H1 (cell line): ENCODE measurements at regions of chr20 and their contacts with region 1.

Region 1: GRCh38 chr20:956330-956951 is 40.3 kb upstream of the ANGPT4 start:
- DNase-seq: peak; percentile 53 to 93
- H3K4me3 ChIP-seq: no peak overlapping the region
- H3K27ac ChIP-seq: no peak overlapping the region
- H3K4me1 ChIP-seq: peaks cover 0 to 3% (median under 1%) of the 10 kb centered on the region in 4 experiments; a peak in 3 of 7 replicates
- H3K27me3 ChIP-seq: peaks cover 0 to 3% (median 0%) of the 10 kb centered on the region in 4 experiments; a peak in 1 of 7 replicates
- CTCF ChIP-seq: peak; percentile 95 to 99 (median 98)
- EP300 ChIP-seq: no peak
- POLR2A ChIP-seq: no peak
- RAD21 ChIP-seq: peak; percentile 100

Region 2: DNA sequence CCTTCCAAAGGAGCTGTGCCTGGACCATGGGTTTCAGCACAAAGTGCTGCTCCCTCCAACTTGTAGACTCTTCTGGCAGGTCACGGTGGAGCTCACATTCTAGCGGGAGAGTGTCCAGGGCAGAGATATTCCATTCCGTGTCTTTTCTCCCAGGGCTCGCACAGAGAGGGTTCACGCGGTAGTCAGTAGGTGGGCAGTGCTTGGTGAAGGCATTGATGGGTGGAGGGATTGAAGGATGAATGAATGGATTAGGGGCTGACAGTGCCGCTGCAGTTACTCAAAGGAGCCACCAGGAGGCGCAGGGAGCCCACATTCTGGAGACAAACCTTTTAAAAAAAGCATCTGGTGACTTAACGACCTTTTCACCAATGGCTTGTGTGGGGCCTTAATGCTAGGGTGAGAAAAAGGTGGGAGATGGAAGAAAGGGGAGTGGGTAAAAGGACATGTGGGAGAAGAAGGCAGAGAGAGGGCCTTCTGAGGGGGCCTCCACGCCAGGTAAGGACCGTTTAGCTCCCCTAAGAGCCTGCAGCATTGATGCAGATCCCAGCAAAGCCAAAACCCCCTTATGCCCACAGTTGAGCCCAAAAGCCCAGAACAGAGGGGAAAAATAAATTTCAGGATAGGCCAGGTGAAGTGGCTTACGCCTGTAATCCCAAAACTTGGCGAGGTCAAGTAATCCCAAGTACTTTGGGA is 140.4 kb before region 1 on chr20:
- CTCF ChIA-PET with region 1: interaction called, 153 read pairs
- POLR2A ChIA-PET with region 1: no interaction called
- DNase-seq: peak; percentile 41 to 82
- H3K4me3 ChIP-seq: no peak overlapping the region
- H3K27ac ChIP-seq: no peak overlapping the region
- H3K4me1 ChIP-seq: no peaks in the 10 kb centered on the region; a peak in 2 of 7 replicates
- H3K27me3 ChIP-seq: no peaks in the 10 kb centered on the region
- CTCF ChIP-seq: peak; percentile 83 to 97 (median 91)
- EP300 ChIP-seq: no peak
- POLR2A ChIP-seq: no peak
- RAD21 ChIP-seq: peak; percentile 96

Region 3: DNA sequence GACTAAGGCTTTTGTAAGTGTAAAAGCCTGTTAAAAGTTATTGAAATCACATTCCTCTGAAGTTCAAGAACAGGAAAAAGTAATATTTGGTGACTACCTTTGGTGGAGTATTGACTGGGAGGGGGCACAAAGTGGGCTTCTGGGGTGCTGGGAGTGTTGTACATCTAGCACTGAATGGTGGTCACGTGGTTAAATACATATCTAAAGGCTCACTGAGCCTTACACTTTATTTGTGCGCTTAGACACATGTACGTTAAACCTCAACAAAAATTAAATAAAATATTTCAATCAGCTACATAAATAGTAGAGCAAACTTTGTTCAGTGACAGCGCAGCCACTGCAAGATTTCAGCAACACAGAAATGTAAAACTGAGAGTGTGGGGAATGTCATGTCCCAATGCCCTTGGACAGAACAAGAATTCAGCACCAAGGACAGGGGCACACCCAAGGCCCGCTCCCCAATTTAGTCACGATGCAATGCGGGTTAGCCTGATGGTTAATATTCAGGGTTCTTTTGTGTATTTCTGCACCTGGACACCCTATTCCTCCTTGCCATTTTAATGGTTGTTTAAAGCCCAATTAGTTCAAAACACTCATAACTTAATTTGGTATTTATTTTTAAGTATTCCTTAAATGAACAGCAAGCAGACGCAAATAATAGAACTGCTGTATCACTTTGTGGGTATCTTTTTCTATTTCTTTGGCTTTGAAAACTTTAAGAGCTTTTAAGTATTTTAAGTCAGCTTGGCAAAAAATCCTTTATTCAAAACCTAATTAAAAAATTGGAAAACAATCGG is 77.7 kb before region 1 on chr20:
- CTCF ChIA-PET with region 1: interaction called, 191 read pairs
- POLR2A ChIA-PET with region 1: no interaction called
- DNase-seq: peak in 1 of 2 experiments; percentile 81
- H3K4me3 ChIP-seq: no peak overlapping the region
- H3K27ac ChIP-seq: no peak overlapping the region
- H3K4me1 ChIP-seq: no peaks in the 10 kb centered on the region; a peak in 1 of 7 replicates
- H3K27me3 ChIP-seq: 0 out of 7 replicates have a peak, but pooled peaks cover 0 to 2% (median 0%) of the 10 kb centered on the region in 4 experiments
- CTCF ChIP-seq: no peak
- EP300 ChIP-seq: no peak
- POLR2A ChIP-seq: no peak
- RAD21 ChIP-seq: no peak

Region 4: GRCh38 chr20:910870-911770 is 45.3 kb before region 1 on chr20:
- CTCF ChIA-PET with region 1: interaction called, 79 read pairs
- POLR2A ChIA-PET with region 1: interaction called, 3 read pairs
- DNase-seq: no peak
- H3K4me3 ChIP-seq: no peak overlapping the region
- H3K27ac ChIP-seq: no peak overlapping the region
- H3K4me1 ChIP-seq: peaks cover 0 to 6% (median 3%) of the 10 kb centered on the region in 4 experiments; a peak in 4 of 7 replicates
- H3K27me3 ChIP-seq: no peaks in the 10 kb centered on the region
- CTCF ChIP-seq: no peak
- EP300 ChIP-seq: no peak
- POLR2A ChIP-seq: no peak
- RAD21 ChIP-seq: no peak

Region 5: GRCh38 chr20:931401-931800 is 25.0 kb before region 1 on chr20:
- CTCF ChIA-PET with region 1: interaction called, 45 read pairs
- POLR2A ChIA-PET with region 1: no interaction called
- DNase-seq: no peak
- H3K4me3 ChIP-seq: no peak overlapping the region
- H3K27ac ChIP-seq: no peak overlapping the region
- H3K4me1 ChIP-seq: 0 out of 7 replicates have a peak, but pooled peaks cover 0 to 3% (median 0%) of the 10 kb centered on the region in 4 experiments
- H3K27me3 ChIP-seq: no peaks in the 10 kb centered on the region
- CTCF ChIP-seq: no peak
- EP300 ChIP-seq: no peak
- POLR2A ChIP-seq: no peak
- RAD21 ChIP-seq: no peak

Region 6: DNA sequence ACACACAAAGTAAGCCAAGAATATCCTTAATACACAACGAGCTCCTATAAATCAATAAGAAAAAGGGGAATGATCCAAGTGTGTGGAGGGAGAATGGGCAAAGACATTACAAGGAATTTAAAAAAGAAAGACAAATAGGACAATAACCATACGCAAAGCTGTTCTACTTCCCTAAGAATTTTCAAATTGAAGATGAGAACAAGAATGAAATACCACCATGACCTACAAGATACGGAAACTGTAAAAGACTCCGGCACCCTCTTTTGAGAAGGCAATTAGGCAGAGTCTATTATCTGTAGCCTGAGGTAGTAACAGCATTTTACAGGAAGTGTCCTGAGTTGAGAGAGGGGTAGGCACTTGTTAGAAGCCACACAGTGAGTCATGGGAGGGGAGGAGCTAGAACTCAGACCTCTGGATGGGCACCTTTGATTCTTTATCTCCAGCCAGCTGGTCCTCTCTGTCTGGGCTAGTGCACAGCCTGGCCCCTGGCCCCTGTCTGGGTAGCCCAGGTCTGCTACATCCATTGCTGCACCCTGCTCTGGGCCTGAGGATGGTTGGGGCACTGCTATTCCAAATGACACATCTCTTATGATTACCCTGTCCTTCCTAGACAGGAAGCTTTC is 30.4 kb after region 1 on chr20:
- CTCF ChIA-PET with region 1: interaction called, 19 read pairs
- POLR2A ChIA-PET with region 1: no interaction called
- DNase-seq: no peak
- H3K4me3 ChIP-seq: no peak overlapping the region
- H3K27ac ChIP-seq: no peak overlapping the region
- H3K4me1 ChIP-seq: peaks cover 0 to 9% (median 3%) of the 10 kb centered on the region in 4 experiments; a peak in 4 of 7 replicates
- H3K27me3 ChIP-seq: no peaks in the 10 kb centered on the region; a peak in 1 of 7 replicates
- CTCF ChIP-seq: no peak
- EP300 ChIP-seq: no peak
- POLR2A ChIP-seq: no peak
- RAD21 ChIP-seq: no peak